ENCODE measurements at regions of chr9 and their contacts with region 1.

Region 1: GRCh38 chr9:101536938-101537337 is 3.3 kb downstream of the RNF20 start:
- DNase-seq: peak; percentile 38
- H3K4me3 Mint-ChIP-seq: no peak overlapping the region
- H3K27ac Mint-ChIP-seq: no peak overlapping the region
- H3K4me1 Mint-ChIP-seq: peaks cover 13% of the 10 kb centered on the region
- H3K27me3 Mint-ChIP-seq: no peaks in the 10 kb centered on the region
- CTCF ChIP-seq: no peak

Region 2: DNA sequence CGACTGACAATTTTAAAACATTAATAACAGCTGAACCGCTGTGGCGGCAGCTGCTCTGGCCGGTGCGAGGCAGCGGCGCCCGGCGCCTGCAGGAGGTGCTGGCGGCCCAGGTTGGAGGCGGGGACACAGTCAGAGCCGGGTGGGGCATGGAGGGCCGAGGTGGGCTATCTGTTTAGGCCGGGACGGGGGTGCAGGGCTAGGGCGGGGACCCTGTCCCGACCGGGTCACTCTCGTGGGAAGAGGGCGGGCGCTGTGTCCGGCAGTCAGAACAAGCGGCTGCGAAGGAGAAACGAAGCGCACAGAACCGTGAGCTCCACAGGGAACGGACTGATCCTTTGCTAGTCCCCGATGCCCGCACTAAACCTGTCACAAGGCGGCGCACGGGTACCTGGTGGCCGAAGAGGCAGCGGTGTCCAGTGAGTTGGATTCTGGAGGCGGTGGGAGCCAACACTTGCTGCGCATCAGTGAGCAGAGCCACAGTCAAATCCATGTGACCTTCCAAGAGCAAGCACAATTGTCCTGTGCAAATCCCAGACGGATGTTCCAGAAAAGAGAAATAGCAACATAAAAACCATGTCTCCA is 87.7 kb before region 1 on chr9:
- CTCF ChIA-PET with region 1: interaction called, 751 read pairs
- POLR2A ChIA-PET with region 1: interaction called, 3 read pairs
- intact Hi-C with region 1: no loop called
- DNase-seq: peak; percentile 75
- H3K4me3 Mint-ChIP-seq: peak overlapping the region; percentile 83
- H3K27ac Mint-ChIP-seq: no peak overlapping the region
- H3K4me1 Mint-ChIP-seq: peaks cover 19% of the 10 kb centered on the region
- H3K27me3 Mint-ChIP-seq: peaks cover 17% of the 10 kb centered on the region
- CTCF ChIP-seq: peak; percentile 64

Measured in MCF 10A (cell line).